A549 (cell line): ENCODE measurements at regions of chr5 and their contacts with region 1.

Region 1: GRCh38 chr5:131589510-131590348 is 45.3 kb downstream of the RAPGEF6 start:
- DNase-seq: peak; percentile 36 to 59
- ATAC-seq: peak; percentile 73 to 93; a peak in 5 of 6 replicates
- H3K4me3 ChIP-seq: no peak overlapping the region
- H3K27ac ChIP-seq: no peak overlapping the region
- H3K4me1 ChIP-seq: no peaks in the 10 kb centered on the region
- CTCF ChIP-seq: peak; percentile 95
- EP300 ChIP-seq: no peak
- POLR2A ChIP-seq: no peak
- RAD21 ChIP-seq: peak; percentile 93

Region 2: DNA sequence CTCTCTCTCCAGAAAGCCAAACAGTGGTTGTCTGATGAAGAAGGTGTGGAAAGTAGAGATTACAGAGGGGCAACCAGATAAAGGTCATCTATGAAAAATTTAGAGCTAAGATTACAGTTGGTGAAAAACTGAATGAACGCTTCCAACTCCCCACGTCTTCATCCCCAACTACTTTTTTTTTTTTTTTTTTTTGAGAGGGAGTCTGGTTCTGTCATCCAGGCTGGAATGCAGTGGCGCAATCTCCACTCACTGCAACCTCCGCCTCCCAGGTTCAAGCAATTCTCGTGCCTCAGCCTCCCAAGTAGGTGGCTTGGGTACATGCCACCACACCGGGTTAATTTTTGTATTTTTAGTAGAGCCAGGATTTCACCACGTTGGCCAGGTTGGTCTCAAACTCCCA is 19.0 kb before region 1 on chr5:
- CTCF ChIA-PET with region 1: interaction called, 19 read pairs
- POLR2A ChIA-PET with region 1: no interaction called
- DNase-seq: no peak
- ATAC-seq: no peak
- H3K4me3 ChIP-seq: no peak overlapping the region
- H3K27ac ChIP-seq: no peak overlapping the region
- H3K4me1 ChIP-seq: peaks cover 5% of the 10 kb centered on the region; the same call in 1 of the 3 replicates
- CTCF ChIP-seq: no peak
- EP300 ChIP-seq: no peak
- POLR2A ChIP-seq: no peak
- RAD21 ChIP-seq: no peak

Region 3: GRCh38 chr5:131610198-131611063 is 20.7 kb after region 1 on chr5:
- CTCF ChIA-PET with region 1: interaction called, 18 read pairs
- POLR2A ChIA-PET with region 1: no interaction called
- DNase-seq: peak; percentile 18 to 37
- ATAC-seq: peak; percentile 68 to 87
- H3K4me3 ChIP-seq: no peak overlapping the region
- H3K27ac ChIP-seq: peak overlapping the region in 1 of 2 experiments; percentile 33; a peak in 2 of 6 replicates
- H3K4me1 ChIP-seq: peaks cover 21% of the 10 kb centered on the region; the same call in 2 of the 3 replicates
- CTCF ChIP-seq: no peak
- EP300 ChIP-seq: no peak
- POLR2A ChIP-seq: no peak
- RAD21 ChIP-seq: no peak

Region 4: GRCh38 chr5:131634996-131635754 is 45.4 kb after region 1 on chr5 and contains the start of gene RAPGEF6:
- CTCF ChIA-PET with region 1: interaction called, 17 read pairs
- POLR2A ChIA-PET with region 1: interaction called, 4 read pairs
- DNase-seq: peak; percentile 88 to 100
- ATAC-seq: peak; percentile 92 to 97
- H3K4me3 ChIP-seq: peak within 1 kb of the TSS; percentile 72
- H3K27ac ChIP-seq: peak within 1 kb of the TSS; percentile 95 to 97
- H3K4me1 ChIP-seq: peaks cover 39% of the 10 kb centered on the region
- CTCF ChIP-seq: no peak
- EP300 ChIP-seq: no peak
- POLR2A ChIP-seq: peak; percentile 81
- RAD21 ChIP-seq: no peak
- polyA plus RNA-seq, gene RAPGEF6: 14.1 and 15.2 TPM in 2 replicates

Region 5: GRCh38 chr5:132007399-132008165 is 417.9 kb after region 1 on chr5:
- CTCF ChIA-PET with region 1: interaction called, 156 read pairs
- POLR2A ChIA-PET with region 1: interaction called, 9 read pairs
- DNase-seq: peak; percentile 70 to 81
- ATAC-seq: peak; percentile 75 to 92
- H3K4me3 ChIP-seq: no peak overlapping the region
- H3K27ac ChIP-seq: no peak overlapping the region
- H3K4me1 ChIP-seq: no peaks in the 10 kb centered on the region
- CTCF ChIP-seq: peak; percentile 85
- EP300 ChIP-seq: no peak
- POLR2A ChIP-seq: no peak
- RAD21 ChIP-seq: peak; percentile 86 to 89